ENCODE measurements at regions of chr13 and their contacts with region 1.

Region 1: GRCh38 chr13:110138010-110138699 is 168.8 kb downstream of the COL4A1 start:
- DNase-seq: peak; percentile 36
- ATAC-seq: peak; percentile 73
- H3K4me3 ChIP-seq: peak overlapping the region; percentile 49
- H3K27ac ChIP-seq: 0 out of 2 replicates have a peak overlapping the region, but pooled peaks have one; percentile 18
- H3K4me1 ChIP-seq: peaks cover 9% of the 10 kb centered on the region; the same call in 1 of the 2 replicates
- H3K27me3 ChIP-seq: no peaks in the 10 kb centered on the region
- CTCF ChIP-seq: no peak
- EP300 ChIP-seq: peak in 1 of 2 experiments; percentile 6; a peak in 1 of 4 replicates
- POLR2A ChIP-seq: peak; percentile 32; the same call in 1 of the 2 replicates
- RAD21 ChIP-seq: no peak

Region 2: DNA sequence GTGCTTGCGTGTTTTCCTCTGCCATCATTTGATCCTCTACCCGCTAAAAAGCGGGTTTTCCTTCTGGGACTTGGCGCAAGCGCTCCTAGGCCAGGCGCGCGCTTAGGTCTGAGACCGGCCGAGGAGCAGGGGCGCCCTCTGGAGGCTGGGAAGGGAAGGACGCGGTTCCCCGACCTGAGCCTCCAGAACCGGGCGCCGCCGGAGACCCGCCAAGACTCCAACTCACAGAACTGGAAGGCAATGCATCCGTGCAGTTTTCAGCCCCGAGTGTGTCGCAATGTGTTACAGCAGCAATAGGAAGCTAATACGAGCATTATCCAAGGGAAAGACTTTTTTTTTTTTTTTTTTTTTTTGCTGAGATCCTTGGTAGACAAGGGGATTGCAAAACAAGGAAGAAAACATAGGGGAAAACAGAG is 22.1 kb before region 1 on chr13:
- CTCF ChIA-PET with region 1: interaction called, 26 read pairs
- POLR2A ChIA-PET with region 1: interaction called, 12 read pairs
- RAD21 ChIA-PET with region 1: interaction called, 17 read pairs
- SMC1A ChIA-PET with region 1: interaction called, 51 read pairs
- in situ Hi-C with region 1: no loop called
- intact Hi-C with region 1: loop called (anchors 1 kb)
- DNase-seq: no peak
- ATAC-seq: peak; percentile 85
- H3K4me3 ChIP-seq: no peak overlapping the region
- H3K27ac ChIP-seq: no peak overlapping the region
- H3K4me1 ChIP-seq: no peaks in the 10 kb centered on the region; the same call in 1 of the 2 replicates
- H3K27me3 ChIP-seq: peaks cover 0 to 2% of the 10 kb centered on the region in 2 experiments; a peak in 1 of 4 replicates
- CTCF ChIP-seq: peak; percentile 71 to 98 (median 88)
- EP300 ChIP-seq: no peak
- POLR2A ChIP-seq: no peak
- RAD21 ChIP-seq: peak; percentile 65

Region 3: DNA sequence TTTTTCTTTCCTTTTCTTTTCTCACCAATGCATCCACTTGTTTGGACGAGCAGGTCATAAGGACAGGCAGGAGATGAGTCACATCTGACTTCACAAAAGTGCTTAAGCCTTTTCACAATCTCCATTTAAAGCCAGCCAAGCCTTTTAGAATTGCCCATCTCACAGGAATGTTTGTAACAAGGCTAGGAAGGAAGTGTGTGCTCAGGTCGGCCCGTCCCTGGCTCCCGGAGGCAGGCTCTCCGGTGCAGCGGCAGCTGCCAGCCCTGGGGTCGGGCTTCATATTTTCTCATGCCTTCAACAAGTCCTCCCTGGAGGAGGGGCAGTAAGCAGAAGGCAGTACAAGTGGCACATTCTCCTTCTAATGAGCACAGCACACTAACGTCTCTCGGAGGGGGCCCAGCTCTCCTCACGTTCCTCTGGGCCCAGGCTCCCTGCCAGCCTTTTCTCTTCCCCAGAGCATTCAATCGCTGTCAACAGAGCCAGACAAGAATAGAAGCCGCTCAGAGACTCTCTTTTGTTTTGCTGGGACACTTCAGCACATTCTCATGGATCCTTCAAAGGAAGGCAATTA is 11.7 kb before region 1 on chr13:
- CTCF ChIA-PET with region 1: interaction called, 26 read pairs
- POLR2A ChIA-PET with region 1: interaction called, 16 read pairs
- RAD21 ChIA-PET with region 1: interaction called, 24 read pairs
- SMC1A ChIA-PET with region 1: interaction called, 51 read pairs
- in situ Hi-C with region 1: no loop called
- intact Hi-C with region 1: loop called (anchors 1 kb)
- DNase-seq: no peak
- ATAC-seq: peak; percentile 1; the same call in 1 of the 3 replicates
- H3K4me3 ChIP-seq: no peak overlapping the region
- H3K27ac ChIP-seq: no peak overlapping the region; the same call in 1 of the 2 replicates
- H3K4me1 ChIP-seq: peaks cover 3% of the 10 kb centered on the region; the same call in 1 of the 2 replicates
- H3K27me3 ChIP-seq: no peaks in the 10 kb centered on the region
- CTCF ChIP-seq: no peak
- EP300 ChIP-seq: no peak
- POLR2A ChIP-seq: no peak
- RAD21 ChIP-seq: no peak

Region 4: GRCh38 chr13:110561344-110562035 is 423.3 kb after region 1 on chr13 and contains the start of gene RAB20:
- CTCF ChIA-PET with region 1: no interaction called
- POLR2A ChIA-PET with region 1: no interaction called
- RAD21 ChIA-PET with region 1: no interaction called
- SMC1A ChIA-PET with region 1: no interaction called
- in situ Hi-C with region 1: no loop called
- intact Hi-C with region 1: loop called (anchors 10 kb)
- DNase-seq: no peak
- ATAC-seq: peak; percentile 75
- H3K4me3 ChIP-seq: peak within 1 kb of the TSS; percentile 91
- H3K27ac ChIP-seq: peak within 1 kb of the TSS; percentile 71
- H3K4me1 ChIP-seq: peaks cover 2% of the 10 kb centered on the region
- H3K27me3 ChIP-seq: no peaks in the 10 kb centered on the region
- CTCF ChIP-seq: no peak
- EP300 ChIP-seq: no peak
- POLR2A ChIP-seq: peak; percentile 61
- RAD21 ChIP-seq: peak; percentile 7; the same call in 1 of the 2 replicates
- polyA plus RNA-seq, gene RAB20: 0.48 to 2.1 TPM